ENCODE measurements at regions of chr2 and their contacts with region 1.

Region 1: GRCh38 chr2:27281855-27282559 is at the start of gene TRIM54:
- DNase-seq: no peak
- H3K4me3 Mint-ChIP-seq: no peak within 1 kb of the TSS
- H3K27ac Mint-ChIP-seq: no peak within 1 kb of the TSS
- H3K4me1 Mint-ChIP-seq: peaks cover 12% of the 10 kb centered on the region
- H3K27me3 Mint-ChIP-seq: peaks cover 16% of the 10 kb centered on the region
- CTCF ChIP-seq: no peak
- total RNA-seq, gene TRIM54: not detected in 2 replicates

Region 2: DNA sequence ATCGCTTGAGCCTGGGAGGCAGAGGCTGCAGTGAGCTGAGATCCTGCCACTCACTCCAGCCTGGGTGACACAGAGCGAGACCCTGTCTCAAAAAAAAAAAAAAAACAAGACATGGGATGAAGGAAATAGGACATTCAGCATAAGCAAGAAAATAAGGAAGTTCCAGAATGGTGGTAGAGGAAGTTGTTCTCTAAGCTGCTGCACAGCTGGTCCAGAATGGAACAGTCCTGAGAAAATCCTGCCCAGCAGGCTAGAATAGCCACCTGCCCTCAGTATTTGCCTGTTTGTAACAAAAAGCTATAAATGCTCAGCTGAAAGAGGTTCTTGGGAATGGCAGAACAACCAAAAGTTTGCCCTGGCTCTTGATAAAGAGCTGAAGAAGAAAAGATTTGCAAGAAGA is 322.7 kb before region 1 on chr2:
- CTCF ChIA-PET with region 1: interaction called, 10 read pairs
- POLR2A ChIA-PET with region 1: no interaction called
- intact Hi-C with region 1: loop called (anchors 1 kb)
- DNase-seq: no peak
- H3K4me3 Mint-ChIP-seq: no peak overlapping the region
- H3K27ac Mint-ChIP-seq: no peak overlapping the region
- H3K4me1 Mint-ChIP-seq: no peaks in the 10 kb centered on the region
- H3K27me3 Mint-ChIP-seq: peaks cover 74% of the 10 kb centered on the region
- CTCF ChIP-seq: no peak

Region 3: DNA sequence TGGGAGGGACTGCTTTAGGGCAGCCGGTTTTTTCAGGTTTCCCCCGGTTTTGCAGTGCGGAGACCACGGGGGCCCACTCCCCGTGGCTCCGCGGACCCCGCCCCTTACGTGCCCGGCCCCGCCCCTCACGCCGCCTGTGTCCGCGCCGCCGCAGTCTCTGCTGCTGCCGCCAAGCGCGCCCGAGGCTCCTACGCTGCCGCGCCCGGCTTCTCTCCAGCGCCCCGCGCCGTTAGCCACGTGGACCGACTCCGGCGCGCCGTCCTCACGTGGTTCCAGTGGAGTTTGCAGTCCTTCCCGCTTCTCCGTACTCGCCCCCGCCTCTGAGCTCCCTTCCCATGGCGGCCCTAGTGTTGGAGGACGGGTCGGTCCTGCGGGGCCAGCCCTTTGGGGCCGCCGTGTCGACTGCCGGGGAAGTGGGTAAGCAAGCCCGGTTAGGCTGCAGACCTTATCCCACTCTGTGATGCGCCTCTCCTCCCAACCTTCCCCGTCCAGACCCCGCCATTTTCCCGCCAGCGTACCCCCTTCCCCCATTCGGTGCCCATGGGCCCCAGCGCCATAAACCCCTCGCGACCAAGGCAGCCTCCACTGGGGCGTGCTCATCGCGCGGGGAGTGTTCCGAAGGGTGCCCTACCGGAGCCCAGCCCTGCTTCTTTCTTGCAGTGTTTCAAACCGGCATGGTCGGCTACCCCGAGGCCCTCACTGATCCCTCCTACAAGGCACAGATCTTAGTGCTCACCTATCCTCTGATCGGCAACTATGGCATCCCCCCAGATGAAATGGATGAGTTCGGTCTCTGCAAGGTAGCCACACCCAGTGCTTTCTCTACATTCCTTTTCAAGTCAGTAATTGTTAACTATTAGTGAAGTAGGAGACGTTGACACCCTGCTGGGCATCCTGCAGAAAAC is 64.5 kb before region 1 on chr2 and contains the start of gene CAD:
- CTCF ChIA-PET with region 1: interaction called, 5 read pairs
- POLR2A ChIA-PET with region 1: interaction called, 4 read pairs
- intact Hi-C with region 1: loop called (anchors 10 kb)
- DNase-seq: peak; percentile 81
- H3K4me3 Mint-ChIP-seq: peak within 1 kb of the TSS; percentile 99
- H3K27ac Mint-ChIP-seq: peak within 1 kb of the TSS; percentile 91
- H3K4me1 Mint-ChIP-seq: peaks cover 22% of the 10 kb centered on the region
- H3K27me3 Mint-ChIP-seq: no peaks in the 10 kb centered on the region
- CTCF ChIP-seq: no peak
- total RNA-seq, gene CAD: 59.5 and 66.5 TPM in 2 replicates

Region 4: DNA sequence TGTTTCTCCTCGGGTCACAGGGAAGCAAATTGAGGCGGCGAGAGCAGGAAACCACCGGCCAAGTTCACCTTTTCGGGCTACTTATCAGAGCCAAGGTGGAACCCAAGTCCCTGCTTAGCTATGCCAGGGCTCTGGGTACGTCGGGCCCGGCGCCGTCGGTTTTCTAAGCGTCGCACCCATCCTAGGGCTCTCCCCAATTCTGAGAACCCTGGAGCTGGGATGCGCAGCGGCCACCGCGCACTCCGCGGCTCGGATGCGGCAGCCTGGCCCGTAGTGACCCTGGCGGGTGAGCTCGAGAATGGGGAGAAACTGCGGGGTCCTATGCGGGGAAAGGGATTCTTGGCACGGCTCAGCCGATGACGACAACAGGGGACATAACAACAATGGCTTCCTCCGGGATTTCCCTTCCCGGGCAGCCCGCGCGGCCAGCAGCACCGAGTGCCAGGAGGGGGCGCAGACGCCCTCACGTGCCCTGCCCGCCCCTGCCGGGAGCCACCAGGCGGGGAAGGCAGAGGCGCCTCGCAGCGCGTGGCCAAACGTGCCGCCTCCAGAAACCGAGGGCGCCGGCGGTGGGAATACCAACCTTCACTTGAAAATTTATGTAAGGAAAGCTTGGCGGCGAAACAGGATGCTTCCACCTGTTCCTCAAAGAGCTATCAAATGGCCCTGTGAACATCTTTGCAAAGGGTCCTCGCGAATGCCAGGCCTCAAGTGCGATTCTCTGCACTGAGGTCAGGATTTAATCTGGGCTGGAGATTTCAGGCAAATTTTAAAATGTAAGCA is 17.1 kb before region 1 on chr2:
- CTCF ChIA-PET with region 1: interaction called, 41 read pairs
- POLR2A ChIA-PET with region 1: interaction called, 3 read pairs
- intact Hi-C with region 1: no loop called
- DNase-seq: no peak
- H3K4me3 Mint-ChIP-seq: peak overlapping the region; percentile 57
- H3K27ac Mint-ChIP-seq: no peak overlapping the region
- H3K4me1 Mint-ChIP-seq: peaks cover 11% of the 10 kb centered on the region
- H3K27me3 Mint-ChIP-seq: peaks cover 24% of the 10 kb centered on the region
- CTCF ChIP-seq: peak; percentile 26

Region 5: GRCh38 chr2:27303093-27304025 is 21.4 kb after region 1 on chr2:
- CTCF ChIA-PET with region 1: interaction called, 39 read pairs
- POLR2A ChIA-PET with region 1: interaction called, 4 read pairs
- intact Hi-C with region 1: loop called (anchors 1 kb)
- DNase-seq: peak; percentile 77
- H3K4me3 Mint-ChIP-seq: peak overlapping the region; percentile 31
- H3K27ac Mint-ChIP-seq: no peak overlapping the region
- H3K4me1 Mint-ChIP-seq: no peaks in the 10 kb centered on the region
- H3K27me3 Mint-ChIP-seq: no peaks in the 10 kb centered on the region
- CTCF ChIP-seq: peak; percentile 76

Region 6: GRCh38 chr2:27489498-27490397 is 207.7 kb after region 1 on chr2 and contains the start of gene IFT172:
- CTCF ChIA-PET with region 1: no interaction called
- POLR2A ChIA-PET with region 1: no interaction called
- intact Hi-C with region 1: no loop called
- DNase-seq: peak; percentile 99
- H3K4me3 Mint-ChIP-seq: peak within 1 kb of the TSS; percentile 92
- H3K27ac Mint-ChIP-seq: peak within 1 kb of the TSS; percentile 87
- H3K4me1 Mint-ChIP-seq: peaks cover 6% of the 10 kb centered on the region
- H3K27me3 Mint-ChIP-seq: no peaks in the 10 kb centered on the region
- CTCF ChIP-seq: no peak
- total RNA-seq, gene IFT172: 20.6 and 22.3 TPM in 2 replicates